A549 (cell line): ENCODE measurements at regions of chr3 and their contacts with region 1.

Region 1: DNA sequence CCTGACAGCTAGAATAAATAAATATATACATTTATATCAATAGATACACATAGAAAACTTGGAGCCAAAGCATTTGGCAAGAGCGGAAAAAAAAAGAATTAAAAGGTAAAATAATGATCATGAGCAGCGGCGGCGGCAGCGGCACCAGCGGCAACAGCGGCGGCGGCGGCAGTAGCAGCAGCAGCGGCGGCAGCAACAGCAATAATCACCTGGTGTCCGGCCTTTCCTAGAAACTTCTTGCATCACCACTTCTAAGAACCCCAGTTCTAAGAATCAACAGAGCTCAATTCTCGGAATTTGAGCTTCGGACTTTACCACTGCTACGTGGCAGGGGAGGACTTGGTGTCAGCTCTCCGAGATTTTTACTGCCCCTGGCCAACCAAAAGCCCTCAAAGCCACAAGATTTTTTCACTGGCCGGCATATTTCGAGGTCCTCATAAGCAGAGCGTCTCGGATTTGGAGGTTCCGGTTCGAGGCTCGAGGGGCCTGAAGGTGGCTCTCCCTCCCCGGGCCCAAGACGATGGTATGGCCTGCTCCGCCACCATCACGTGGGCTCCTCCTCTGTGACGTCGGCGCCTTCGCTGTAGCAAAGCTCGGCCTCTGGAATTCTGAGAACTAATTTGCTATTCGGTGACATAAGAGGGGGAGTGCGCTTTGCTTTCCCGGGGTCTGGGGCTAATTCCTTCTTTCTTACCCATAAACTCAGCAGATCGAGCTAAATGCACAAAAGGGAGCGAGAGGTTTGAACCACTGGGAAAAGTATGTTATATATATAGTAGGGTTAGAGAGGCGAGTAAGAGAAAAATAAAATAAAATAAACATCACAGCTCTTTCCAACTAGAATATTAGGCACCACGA is at the start of gene BCL6:
- DNase-seq: peak; percentile 85 to 96
- ATAC-seq: peak; percentile 56 to 63; a peak in 5 of 6 replicates
- H3K4me3 ChIP-seq: peak within 1 kb of the TSS; percentile 69
- H3K27ac ChIP-seq: peak within 1 kb of the TSS; percentile 96 to 99
- H3K4me1 ChIP-seq: peaks cover 51% of the 10 kb centered on the region
- CTCF ChIP-seq: no peak
- EP300 ChIP-seq: 0 out of 5 replicates have a peak, but pooled peaks of 1 of the 2 experiments have one; percentile 38
- POLR2A ChIP-seq: peak; percentile 52
- RAD21 ChIP-seq: peak in 1 of 2 experiments; percentile 26; a peak in 1 of 5 replicates
- polyA plus RNA-seq, gene BCL6: 7.0 and 20.8 TPM in 2 replicates

Region 2: GRCh38 chr3:187551416-187551815 is 194.0 kb before region 1 on chr3:
- CTCF ChIA-PET with region 1: no interaction called
- POLR2A ChIA-PET with region 1: no interaction called
- DNase-seq: no peak
- ATAC-seq: no peak
- H3K4me3 ChIP-seq: no peak overlapping the region
- H3K27ac ChIP-seq: no peak overlapping the region
- H3K4me1 ChIP-seq: no peaks in the 10 kb centered on the region
- CTCF ChIP-seq: no peak
- EP300 ChIP-seq: no peak
- POLR2A ChIP-seq: no peak
- RAD21 ChIP-seq: no peak

Region 3: GRCh38 chr3:188154014-188154808 is 408.8 kb after region 1 on chr3 and contains the start of gene LPP:
- CTCF ChIA-PET with region 1: interaction called, 7 read pairs
- POLR2A ChIA-PET with region 1: interaction called, 24 read pairs
- DNase-seq: peak; percentile 69 to 81
- ATAC-seq: peak; percentile 91
- H3K4me3 ChIP-seq: peak within 1 kb of the TSS; percentile 59
- H3K27ac ChIP-seq: peak within 1 kb of the TSS; percentile 98 to 99
- H3K4me1 ChIP-seq: peaks cover 59% of the 10 kb centered on the region
- CTCF ChIP-seq: no peak
- EP300 ChIP-seq: 0 out of 5 replicates have a peak, but pooled peaks of 1 of the 2 experiments have one; percentile 32
- POLR2A ChIP-seq: no peak
- RAD21 ChIP-seq: no peak; a peak in 2 of 5 replicates
- polyA plus RNA-seq, gene LPP: 30.4 and 30.8 TPM in 2 replicates

Region 4: DNA sequence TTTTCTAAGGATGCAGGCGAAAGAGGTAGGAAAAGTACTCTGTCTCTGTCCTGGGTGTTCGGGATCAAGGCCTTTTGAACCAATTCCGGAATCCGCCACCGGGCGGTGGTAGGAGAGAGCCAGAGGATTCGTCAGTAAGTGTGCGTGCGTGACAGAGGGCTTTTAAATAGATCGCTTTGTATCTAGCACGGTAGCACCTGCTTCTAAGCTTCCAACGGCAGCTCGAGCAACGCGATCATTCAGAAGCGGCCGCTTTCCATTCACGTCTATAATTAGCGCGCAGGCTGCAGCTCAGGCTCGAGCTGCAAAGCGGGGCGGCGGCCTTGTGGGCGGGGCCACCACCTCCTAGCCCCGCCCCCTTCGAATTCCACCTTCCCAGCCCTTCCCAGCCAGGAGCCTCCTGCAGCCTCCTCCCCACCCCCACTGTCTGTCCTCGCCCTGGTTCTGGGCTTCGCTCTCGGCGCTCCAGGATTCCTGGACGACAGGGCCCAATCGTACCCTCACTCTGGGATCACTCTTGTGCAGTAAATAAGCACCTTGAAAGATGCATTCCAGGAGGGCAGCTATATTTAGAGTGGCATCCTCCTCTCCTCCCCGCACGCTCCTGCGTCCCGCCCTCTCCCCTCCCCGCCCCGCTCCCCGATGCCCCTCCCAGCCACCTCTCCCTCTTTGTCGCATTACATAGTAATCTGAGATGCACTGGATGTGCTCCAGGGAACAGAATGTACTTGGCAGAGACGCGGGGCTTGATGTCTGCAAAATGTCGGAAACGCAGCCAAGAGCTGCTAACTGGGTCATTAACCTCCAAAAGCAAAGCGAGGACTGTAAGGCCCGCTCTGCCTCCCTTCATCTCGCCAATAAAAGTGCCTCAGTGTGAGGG is 1202.2 kb after region 1 on chr3:
- CTCF ChIA-PET with region 1: interaction called, 221 read pairs
- POLR2A ChIA-PET with region 1: interaction called, 17 read pairs
- DNase-seq: peak; percentile 86 to 87
- ATAC-seq: peak; percentile 86 to 88
- H3K4me3 ChIP-seq: peak overlapping the region; percentile 43
- H3K27ac ChIP-seq: peak overlapping the region; percentile 93 to 98
- H3K4me1 ChIP-seq: peaks cover 43% of the 10 kb centered on the region
- CTCF ChIP-seq: peak; percentile 33; the same call in 2 of the 3 replicates
- EP300 ChIP-seq: no peak
- POLR2A ChIP-seq: peak; percentile 38; the same call in 1 of the 2 replicates
- RAD21 ChIP-seq: peak; percentile 18 to 30; a peak in 2 of 5 replicates